A549 (cell line): ENCODE measurements at regions of chr2 and their contacts with region 1.

Region 1: GRCh38 chr2:26846328-26847306 is 1.3 kb upstream of the DPYSL5 start:
- DNase-seq: peak; percentile 80 to 90
- ATAC-seq: peak; percentile 71 to 82
- H3K4me3 ChIP-seq: no peak overlapping the region
- H3K27ac ChIP-seq: peak overlapping the region in 1 of 2 experiments; percentile 59; a peak in 2 of 6 replicates
- H3K4me1 ChIP-seq: peaks cover 12% of the 10 kb centered on the region; the same call in 2 of the 3 replicates
- CTCF ChIP-seq: peak; percentile 97
- EP300 ChIP-seq: no peak
- POLR2A ChIP-seq: no peak
- RAD21 ChIP-seq: peak; percentile 96 to 97

Region 2: GRCh38 chr2:26807788-26808460 is 38.7 kb before region 1 on chr2:
- CTCF ChIA-PET with region 1: interaction called, 17 read pairs
- POLR2A ChIA-PET with region 1: no interaction called
- DNase-seq: no peak
- ATAC-seq: peak; percentile 40 to 49; a peak in 3 of 6 replicates
- H3K4me3 ChIP-seq: no peak overlapping the region
- H3K27ac ChIP-seq: no peak overlapping the region
- H3K4me1 ChIP-seq: no peaks in the 10 kb centered on the region
- CTCF ChIP-seq: no peak
- EP300 ChIP-seq: no peak
- POLR2A ChIP-seq: no peak
- RAD21 ChIP-seq: no peak

Region 3: GRCh38 chr2:26870585-26871095 is 24.0 kb after region 1 on chr2:
- CTCF ChIA-PET with region 1: interaction called, 24 read pairs
- POLR2A ChIA-PET with region 1: no interaction called
- DNase-seq: no peak
- ATAC-seq: no peak
- H3K4me3 ChIP-seq: no peak overlapping the region
- H3K27ac ChIP-seq: no peak overlapping the region
- H3K4me1 ChIP-seq: no peaks in the 10 kb centered on the region
- CTCF ChIP-seq: no peak
- EP300 ChIP-seq: no peak
- POLR2A ChIP-seq: no peak
- RAD21 ChIP-seq: no peak

Region 4: DNA sequence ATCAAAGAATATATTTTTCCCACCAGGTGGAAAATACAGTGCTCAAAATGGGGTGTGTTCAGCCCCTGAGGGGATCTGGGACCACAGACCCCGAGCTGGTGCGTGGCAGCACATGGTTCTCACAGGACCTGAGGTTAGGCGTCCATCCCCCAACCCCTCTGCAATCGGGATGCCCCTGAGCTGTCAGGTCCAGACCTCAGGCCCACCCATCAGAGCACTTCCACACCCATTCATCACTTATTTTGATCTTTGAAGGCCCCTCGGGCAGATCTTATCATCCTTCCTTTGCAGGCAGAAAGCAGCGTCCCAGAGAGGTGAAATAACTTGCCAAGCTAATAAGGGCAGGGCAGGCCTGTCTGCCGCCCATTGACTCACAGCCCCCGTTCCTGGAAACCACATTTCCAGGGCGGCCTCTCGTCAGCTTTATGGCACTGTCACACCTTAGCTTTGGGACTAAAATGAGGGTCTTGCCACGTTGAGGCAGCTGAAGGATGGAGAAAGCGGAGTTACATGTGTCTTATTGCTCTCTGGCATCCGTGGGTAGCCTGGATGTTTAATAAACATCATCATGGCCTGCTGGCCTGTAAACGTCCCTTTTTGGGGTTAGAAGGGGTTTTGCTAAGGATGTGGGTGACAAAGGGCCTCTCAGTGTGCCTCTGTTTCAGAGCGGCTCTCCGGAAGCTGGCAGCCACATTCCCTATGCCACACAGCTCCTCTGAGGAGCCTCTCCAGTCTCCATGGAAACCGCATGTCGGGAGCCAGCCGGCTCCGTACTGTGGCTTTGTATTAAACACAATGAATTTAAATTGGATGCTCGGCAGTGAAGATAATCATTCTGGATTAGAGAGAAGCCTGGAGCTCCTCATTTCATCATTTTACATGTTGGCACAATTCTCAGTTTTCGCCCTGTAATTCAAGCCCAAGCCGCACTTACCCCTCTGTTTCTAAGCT is 65.6 kb after region 1 on chr2:
- CTCF ChIA-PET with region 1: interaction called, 75 read pairs
- POLR2A ChIA-PET with region 1: no interaction called
- DNase-seq: no peak
- ATAC-seq: no peak
- H3K4me3 ChIP-seq: no peak overlapping the region
- H3K27ac ChIP-seq: no peak overlapping the region
- H3K4me1 ChIP-seq: no peaks in the 10 kb centered on the region
- CTCF ChIP-seq: no peak
- EP300 ChIP-seq: no peak
- POLR2A ChIP-seq: no peak
- RAD21 ChIP-seq: no peak

Region 5: GRCh38 chr2:26970244-26970920 is 123.8 kb after region 1 on chr2 and contains the start of gene MAPRE3:
- CTCF ChIA-PET with region 1: interaction called, 669 read pairs
- POLR2A ChIA-PET with region 1: no interaction called
- DNase-seq: peak; percentile 83 to 95
- ATAC-seq: peak; percentile 89 to 95
- H3K4me3 ChIP-seq: peak within 1 kb of the TSS; percentile 93
- H3K27ac ChIP-seq: peak within 1 kb of the TSS; percentile 79 to 87
- H3K4me1 ChIP-seq: peaks cover 26% of the 10 kb centered on the region
- CTCF ChIP-seq: no peak
- EP300 ChIP-seq: no peak
- POLR2A ChIP-seq: no peak; the same call in 1 of the 2 replicates
- RAD21 ChIP-seq: no peak
- polyA plus RNA-seq, gene MAPRE3: 12.0 and 12.1 TPM in 2 replicates

Region 6: GRCh38 chr2:27003857-27004256 is 157.2 kb after region 1 on chr2:
- CTCF ChIA-PET with region 1: interaction called, 175 read pairs
- POLR2A ChIA-PET with region 1: no interaction called
- DNase-seq: no peak
- ATAC-seq: no peak
- H3K4me3 ChIP-seq: no peak overlapping the region
- H3K27ac ChIP-seq: no peak overlapping the region
- H3K4me1 ChIP-seq: peaks cover 7% of the 10 kb centered on the region; the same call in 1 of the 3 replicates
- CTCF ChIP-seq: no peak
- EP300 ChIP-seq: no peak
- POLR2A ChIP-seq: no peak
- RAD21 ChIP-seq: no peak

Region 7: GRCh38 chr2:27042159-27042661 is 195.6 kb after region 1 on chr2:
- CTCF ChIA-PET with region 1: interaction called, 15 read pairs
- POLR2A ChIA-PET with region 1: no interaction called
- DNase-seq: no peak
- ATAC-seq: no peak
- H3K4me3 ChIP-seq: no peak overlapping the region
- H3K27ac ChIP-seq: no peak overlapping the region
- H3K4me1 ChIP-seq: no peaks in the 10 kb centered on the region
- CTCF ChIP-seq: no peak
- EP300 ChIP-seq: no peak
- POLR2A ChIP-seq: no peak
- RAD21 ChIP-seq: no peak